Activated CD4-positive, alpha-beta T cell treated with anti-CD3 and anti-CD28 coated beads, Interleukin-2, amount 10 ng/mL, durations not matched to agents 24 days and 14 days (primary cell): ENCODE measurements at regions of chr12 and their contacts with region 1.

Region 1: GRCh38 chr12:48350249-48351021 is at the start of gene ZNF641:
- DNase-seq: peak; percentile 95
- H3K4me3 Mint-ChIP-seq: peak within 1 kb of the TSS; percentile 97
- H3K27ac Mint-ChIP-seq: peak within 1 kb of the TSS; percentile 92
- H3K4me1 Mint-ChIP-seq: peaks cover 24% of the 10 kb centered on the region
- H3K27me3 Mint-ChIP-seq: peaks cover 9% of the 10 kb centered on the region
- total RNA-seq, gene ZNF641: 6.7 and 7.6 TPM in 2 replicates

Region 2: GRCh38 chr12:48119078-48119833 is 231.2 kb before region 1 on chr12 and contains the start of gene PFKM:
- intact Hi-C with region 1: loop called (anchors 1 kb)
- DNase-seq: peak; percentile 92
- H3K4me3 Mint-ChIP-seq: peak within 1 kb of the TSS; percentile 98
- H3K27ac Mint-ChIP-seq: peak within 1 kb of the TSS; percentile 91
- H3K4me1 Mint-ChIP-seq: peaks cover 18% of the 10 kb centered on the region
- H3K27me3 Mint-ChIP-seq: peaks cover 25% of the 10 kb centered on the region
- total RNA-seq, gene PFKM: 87.3 and 93.2 TPM in 2 replicates

Region 3: GRCh38 chr12:48197971-48198671 is 152.3 kb before region 1 on chr12:
- intact Hi-C with region 1: loop called (anchors 1 kb)
- DNase-seq: peak; percentile 97
- H3K4me3 Mint-ChIP-seq: peak overlapping the region; percentile 88
- H3K27ac Mint-ChIP-seq: peak overlapping the region; percentile 97
- H3K4me1 Mint-ChIP-seq: peaks cover 29% of the 10 kb centered on the region
- H3K27me3 Mint-ChIP-seq: peaks cover 19% of the 10 kb centered on the region

Region 4: DNA sequence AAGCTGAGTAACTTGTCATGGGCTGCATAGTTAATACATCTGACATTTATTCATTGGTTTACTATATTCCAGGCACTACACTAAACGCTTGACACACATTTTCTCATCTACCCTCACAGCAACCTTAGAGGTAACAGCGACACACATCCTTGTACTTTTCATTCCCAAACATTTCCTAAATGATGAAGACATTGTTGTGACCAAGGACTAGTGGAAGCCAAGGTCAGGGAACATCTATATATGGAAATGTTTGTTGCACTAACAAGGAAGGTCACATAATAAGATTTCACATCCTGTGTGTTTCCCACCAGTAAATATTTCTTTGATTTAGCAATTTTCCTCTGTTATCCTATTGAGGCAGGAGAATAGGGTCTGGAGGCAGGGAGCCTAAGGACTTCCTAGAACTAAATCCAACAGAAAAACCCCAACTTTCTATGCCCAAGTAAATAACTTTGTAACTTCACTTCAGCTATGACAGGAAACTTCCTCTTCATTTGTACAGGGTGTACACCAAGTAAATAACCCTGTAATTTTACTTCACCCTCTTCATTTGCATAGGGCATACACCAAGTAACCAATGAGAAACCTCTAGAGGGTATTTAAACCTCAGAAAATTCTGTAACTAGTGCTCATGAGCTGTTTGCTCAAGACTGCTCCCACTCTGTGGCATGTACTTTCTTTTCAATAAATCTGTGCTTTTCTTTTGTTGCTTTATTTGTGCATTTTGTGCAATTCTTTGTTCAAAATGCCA is 48.1 kb before region 1 on chr12:
- intact Hi-C with region 1: no loop called
- DNase-seq: no peak
- H3K4me3 Mint-ChIP-seq: no peak overlapping the region
- H3K27ac Mint-ChIP-seq: no peak overlapping the region
- H3K4me1 Mint-ChIP-seq: no peaks in the 10 kb centered on the region
- H3K27me3 Mint-ChIP-seq: peaks cover 5% of the 10 kb centered on the region